GM12878 (cell line): ENCODE measurements at regions of chr2 and their contacts with region 1.

Region 1: DNA sequence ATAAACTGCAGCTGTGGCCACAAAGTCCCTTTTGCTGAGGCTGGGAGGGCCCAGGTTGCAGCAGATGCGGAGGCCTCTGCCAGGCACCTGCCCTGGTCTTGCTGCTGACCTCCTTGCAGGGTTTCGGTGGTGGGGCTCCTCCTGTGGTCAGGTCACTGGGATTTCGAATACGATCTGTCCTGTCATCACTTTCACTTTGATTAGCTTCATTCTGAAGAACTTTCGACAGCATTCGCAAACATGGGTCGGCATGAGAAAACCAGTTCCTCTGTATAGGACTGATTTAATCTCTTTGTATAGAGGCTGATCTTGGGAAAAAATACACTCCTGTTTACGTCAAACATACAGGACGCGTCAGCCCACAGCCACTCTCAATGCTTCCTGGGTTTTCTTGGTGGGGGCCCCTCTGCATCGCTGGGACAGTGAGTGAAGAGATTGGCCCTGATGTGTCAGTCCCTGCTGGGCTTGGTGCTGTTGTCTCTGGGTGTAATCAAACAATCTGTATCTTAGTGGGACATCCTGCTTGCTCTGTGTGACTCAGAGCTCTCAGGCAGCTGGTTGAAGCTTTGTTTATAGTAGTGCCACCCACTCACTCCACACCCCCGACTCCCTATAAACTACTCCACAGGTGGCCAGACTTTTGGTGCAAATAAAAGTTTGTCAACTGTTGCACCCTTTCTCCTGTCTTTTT is 209.4 kb upstream of the CXCR4 start:
- DNase-seq: peak; percentile 71
- ATAC-seq: peak; percentile 89
- H3K4me3 ChIP-seq: peak overlapping the region; percentile 37; the same call in 1 of the 2 replicates
- H3K27ac ChIP-seq: no peak overlapping the region
- H3K4me1 ChIP-seq: peaks cover 26% of the 10 kb centered on the region
- H3K27me3 ChIP-seq: 0 out of 4 replicates have a peak, but pooled peaks cover 0 to 2% of the 10 kb centered on the region in 2 experiments
- CTCF ChIP-seq: no peak
- EP300 ChIP-seq: peak; percentile 95 to 96; a peak in 3 of 4 replicates
- POLR2A ChIP-seq: no peak
- RAD21 ChIP-seq: no peak

Region 2: GRCh38 chr2:134762508-134762907 is 1564.8 kb before region 1 on chr2:
- CTCF ChIA-PET with region 1: no interaction called
- POLR2A ChIA-PET with region 1: no interaction called
- RAD21 ChIA-PET with region 1: no interaction called
- SMC1A ChIA-PET with region 1: no interaction called
- in situ Hi-C with region 1: no loop called
- intact Hi-C with region 1: no loop called
- DNase-seq: no peak
- ATAC-seq: no peak
- H3K4me3 ChIP-seq: no peak overlapping the region
- H3K27ac ChIP-seq: no peak overlapping the region
- H3K4me1 ChIP-seq: peaks cover 11% of the 10 kb centered on the region; the same call in 1 of the 2 replicates
- H3K27me3 ChIP-seq: no peaks in the 10 kb centered on the region
- CTCF ChIP-seq: no peak
- EP300 ChIP-seq: no peak
- POLR2A ChIP-seq: no peak
- RAD21 ChIP-seq: no peak

Region 3: DNA sequence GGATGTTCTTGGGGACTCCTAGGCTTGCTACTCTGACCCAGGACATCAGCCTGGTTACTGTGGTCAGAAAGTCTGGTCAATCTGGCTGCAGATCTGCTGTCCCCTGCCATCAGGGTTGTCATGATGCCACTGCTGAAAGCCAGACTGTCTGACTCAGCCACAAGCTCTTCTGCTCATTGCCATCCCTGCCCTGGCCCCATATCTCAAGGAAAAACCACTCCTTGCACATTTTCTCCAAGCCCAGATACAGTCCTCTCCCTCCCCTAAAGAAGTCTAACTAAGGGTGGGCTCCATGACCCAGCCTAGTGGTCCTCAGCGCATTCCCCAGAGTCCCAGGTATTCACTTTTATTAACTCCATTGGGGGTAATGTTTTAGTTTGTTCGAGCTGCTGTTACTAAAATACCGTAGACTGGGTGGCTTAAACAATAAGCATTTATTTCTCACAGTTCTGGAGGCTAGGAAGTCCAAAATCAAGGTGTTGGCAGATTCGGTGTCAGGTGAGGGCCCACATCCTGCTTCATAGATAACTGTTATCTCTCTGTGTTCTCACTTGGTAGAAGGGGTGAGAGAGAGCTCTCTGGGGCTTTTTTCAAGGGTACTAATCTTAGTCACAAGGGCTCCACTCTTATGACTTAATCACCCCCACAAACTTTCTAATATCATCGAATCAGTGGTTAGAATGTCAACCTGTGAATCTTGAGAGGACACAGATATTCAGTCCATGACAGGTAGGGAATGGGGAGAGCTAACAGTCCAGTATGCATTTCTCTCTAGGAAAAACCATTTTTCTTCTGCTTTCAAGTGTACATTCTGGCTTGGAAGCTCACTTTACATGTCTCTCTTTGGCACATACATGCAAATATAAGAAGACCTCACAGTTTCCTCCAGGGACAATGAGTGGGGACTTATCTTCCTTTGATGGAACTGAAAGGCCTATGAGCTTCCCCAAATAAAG is 114.6 kb before region 1 on chr2:
- CTCF ChIA-PET with region 1: interaction called, 4 read pairs
- POLR2A ChIA-PET with region 1: interaction called, 7 read pairs
- RAD21 ChIA-PET with region 1: interaction called, 14 read pairs
- SMC1A ChIA-PET with region 1: interaction called, 12 read pairs
- in situ Hi-C with region 1: no loop called
- intact Hi-C with region 1: loop called (anchors 2 kb)
- DNase-seq: peak; percentile 34
- ATAC-seq: peak; percentile 83
- H3K4me3 ChIP-seq: no peak overlapping the region
- H3K27ac ChIP-seq: no peak overlapping the region
- H3K4me1 ChIP-seq: peaks cover 4% of the 10 kb centered on the region
- H3K27me3 ChIP-seq: peaks cover 0 to 8% of the 10 kb centered on the region in 2 experiments; a peak in 2 of 4 replicates
- CTCF ChIP-seq: no peak
- EP300 ChIP-seq: peak in 1 of 2 experiments; percentile 78; a peak in 3 of 4 replicates
- POLR2A ChIP-seq: no peak
- RAD21 ChIP-seq: no peak

Region 4: DNA sequence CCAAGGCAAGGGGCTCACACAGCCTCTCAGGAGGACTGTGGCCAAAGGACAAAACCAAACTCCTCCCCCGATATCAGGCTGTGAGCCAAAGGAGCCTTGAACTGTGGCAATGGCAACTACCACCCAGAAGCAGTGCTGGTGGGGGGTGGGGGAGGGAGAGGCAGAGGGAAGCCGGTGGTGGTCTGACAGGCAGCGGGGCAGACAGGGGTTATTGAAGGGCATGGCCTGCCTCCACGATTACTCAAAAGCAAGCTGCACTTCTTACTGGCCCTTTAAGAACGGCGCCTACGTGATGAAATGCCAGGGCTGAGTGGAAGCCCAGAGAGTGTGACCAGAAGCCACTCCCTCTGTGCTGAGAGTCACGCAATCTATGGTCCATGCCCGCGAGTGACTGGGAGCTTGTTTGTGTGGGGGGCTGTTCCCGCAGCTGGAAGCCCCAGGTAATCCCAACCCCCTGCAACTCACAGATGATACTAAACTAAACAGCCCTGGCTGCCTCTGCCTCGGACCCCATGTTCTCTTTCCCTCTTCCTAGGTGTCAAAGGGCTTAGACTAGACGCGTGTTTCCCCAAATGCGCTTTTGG is 81.1 kb before region 1 on chr2:
- CTCF ChIA-PET with region 1: no interaction called
- POLR2A ChIA-PET with region 1: no interaction called
- RAD21 ChIA-PET with region 1: interaction called, 13 read pairs
- SMC1A ChIA-PET with region 1: interaction called, 4 read pairs
- in situ Hi-C with region 1: no loop called
- intact Hi-C with region 1: no loop called
- DNase-seq: peak; percentile 60
- ATAC-seq: peak; percentile 96
- H3K4me3 ChIP-seq: no peak overlapping the region
- H3K27ac ChIP-seq: no peak overlapping the region; the same call in 1 of the 2 replicates
- H3K4me1 ChIP-seq: peaks cover 3% of the 10 kb centered on the region; the same call in 1 of the 2 replicates
- H3K27me3 ChIP-seq: 0 out of 4 replicates have a peak, but pooled peaks cover 0 to 2% of the 10 kb centered on the region in 2 experiments
- CTCF ChIP-seq: no peak
- EP300 ChIP-seq: peak; percentile 78 to 87; a peak in 3 of 4 replicates
- POLR2A ChIP-seq: no peak
- RAD21 ChIP-seq: no peak

Region 5: DNA sequence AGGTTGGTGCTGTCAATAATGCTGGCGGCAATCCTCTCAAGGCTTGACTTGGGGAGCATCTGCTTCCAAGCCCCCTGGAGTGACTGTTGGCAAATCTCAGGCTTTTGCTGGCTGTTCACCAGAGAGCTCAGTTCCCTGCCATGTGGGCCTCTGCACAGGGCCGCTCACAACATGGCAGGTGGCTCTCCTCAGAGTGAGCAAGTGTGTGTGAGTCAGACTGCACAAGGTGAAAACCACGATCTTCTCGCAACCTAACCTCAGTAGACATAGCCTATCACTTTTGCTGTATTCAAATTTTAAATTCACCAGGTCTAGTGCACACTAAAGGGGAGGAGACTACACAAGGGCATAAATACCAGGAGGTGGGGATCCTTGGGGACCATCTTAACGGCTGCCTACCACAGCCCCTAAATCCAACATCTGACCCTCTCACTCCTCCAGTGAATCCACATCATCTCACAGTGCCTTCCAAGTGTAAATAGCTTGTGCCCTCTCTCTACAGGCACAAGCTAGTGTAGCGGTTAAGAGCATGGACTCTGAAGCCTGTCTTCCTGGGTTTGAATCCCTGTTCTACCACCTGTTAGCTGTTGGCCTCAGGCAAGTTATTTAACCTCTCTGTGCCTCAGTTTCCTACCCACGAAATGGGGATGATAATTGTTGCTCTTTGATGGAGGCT is 21.7 kb before region 1 on chr2:
- CTCF ChIA-PET with region 1: interaction called, 5 read pairs
- POLR2A ChIA-PET with region 1: interaction called, 16 read pairs
- RAD21 ChIA-PET with region 1: interaction called, 28 read pairs
- SMC1A ChIA-PET with region 1: interaction called, 27 read pairs
- in situ Hi-C with region 1: no loop called
- intact Hi-C with region 1: no loop called
- DNase-seq: no peak
- ATAC-seq: peak; percentile 93
- H3K4me3 ChIP-seq: no peak overlapping the region
- H3K27ac ChIP-seq: no peak overlapping the region
- H3K4me1 ChIP-seq: peaks cover 6% of the 10 kb centered on the region
- H3K27me3 ChIP-seq: peaks cover 0 to 5% of the 10 kb centered on the region in 2 experiments; a peak in 1 of 4 replicates
- CTCF ChIP-seq: no peak
- EP300 ChIP-seq: peak; percentile 62 to 64; a peak in 1 of 4 replicates
- POLR2A ChIP-seq: no peak
- RAD21 ChIP-seq: no peak

Region 6: DNA sequence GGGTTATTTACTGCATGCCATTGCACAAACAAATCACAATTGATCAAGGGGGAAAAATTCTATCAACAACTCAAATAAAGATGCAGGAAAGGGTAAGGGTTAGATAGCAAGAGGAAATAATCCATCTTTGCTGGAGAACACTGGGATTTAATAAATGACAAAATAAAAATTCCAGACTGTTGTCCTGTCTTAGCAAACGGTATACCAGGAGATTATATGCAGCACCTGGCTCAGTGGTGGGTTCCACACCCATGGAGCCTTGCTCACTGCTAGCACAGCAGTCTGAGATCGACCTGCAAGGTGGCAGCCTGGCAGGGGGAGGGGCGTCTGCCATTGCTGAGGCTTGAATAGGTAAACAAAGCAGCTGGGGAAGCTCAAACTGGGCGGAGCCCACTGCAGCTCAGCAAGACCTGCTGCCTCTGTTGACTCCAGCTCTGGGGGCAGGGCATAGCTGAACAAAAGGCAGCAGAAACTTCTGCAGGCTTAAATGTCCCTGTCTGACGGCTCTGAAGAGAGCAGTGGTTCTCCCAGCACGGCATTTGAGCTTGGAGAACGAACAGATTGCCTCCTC is 141.6 kb after region 1 on chr2:
- CTCF ChIA-PET with region 1: no interaction called
- POLR2A ChIA-PET with region 1: no interaction called
- RAD21 ChIA-PET with region 1: no interaction called
- SMC1A ChIA-PET with region 1: no interaction called
- in situ Hi-C with region 1: no loop called
- intact Hi-C with region 1: no loop called
- DNase-seq: no peak
- ATAC-seq: no peak
- H3K4me3 ChIP-seq: no peak overlapping the region
- H3K27ac ChIP-seq: no peak overlapping the region
- H3K4me1 ChIP-seq: no peaks in the 10 kb centered on the region
- H3K27me3 ChIP-seq: no peaks in the 10 kb centered on the region; a peak in 2 of 4 replicates
- CTCF ChIP-seq: no peak
- EP300 ChIP-seq: no peak
- POLR2A ChIP-seq: no peak
- RAD21 ChIP-seq: no peak